PC-3 (cell line): ENCODE measurements at regions of chr1 and their contacts with region 1.

Region 1: GRCh38 chr1:45303582-45304310 is 22.9 kb upstream of the HPDL start:
- DNase-seq: peak; percentile 98
- ATAC-seq: peak; percentile 90
- H3K4me3 ChIP-seq: peak overlapping the region; percentile 73
- H3K27ac ChIP-seq: peak overlapping the region; percentile 71
- H3K4me1 ChIP-seq: peaks cover 22% of the 10 kb centered on the region
- H3K27me3 ChIP-seq: no peaks in the 10 kb centered on the region
- CTCF ChIP-seq: peak; percentile 78

Region 2: GRCh38 chr1:44792783-44793714 is 510.7 kb before region 1 on chr1:
- CTCF ChIA-PET with region 1: no interaction called
- POLR2A ChIA-PET with region 1: no interaction called
- intact Hi-C with region 1: loop called (anchors 5 kb)
- DNase-seq: no peak
- ATAC-seq: no peak
- H3K4me3 ChIP-seq: no peak overlapping the region
- H3K27ac ChIP-seq: no peak overlapping the region
- H3K4me1 ChIP-seq: no peaks in the 10 kb centered on the region
- H3K27me3 ChIP-seq: no peaks in the 10 kb centered on the region
- CTCF ChIP-seq: no peak

Region 3: GRCh38 chr1:44985747-44986359 is 317.9 kb before region 1 on chr1:
- CTCF ChIA-PET with region 1: no interaction called
- POLR2A ChIA-PET with region 1: interaction called, 11 read pairs
- intact Hi-C with region 1: no loop called
- DNase-seq: no peak
- ATAC-seq: peak; percentile 19
- H3K4me3 ChIP-seq: peak overlapping the region; percentile 82
- H3K27ac ChIP-seq: 0 out of 2 replicates have a peak overlapping the region, but pooled peaks have one; percentile 5
- H3K4me1 ChIP-seq: peaks cover 3% of the 10 kb centered on the region; the same call in 1 of the 2 replicates
- H3K27me3 ChIP-seq: no peaks in the 10 kb centered on the region
- CTCF ChIP-seq: no peak

Region 4: DNA sequence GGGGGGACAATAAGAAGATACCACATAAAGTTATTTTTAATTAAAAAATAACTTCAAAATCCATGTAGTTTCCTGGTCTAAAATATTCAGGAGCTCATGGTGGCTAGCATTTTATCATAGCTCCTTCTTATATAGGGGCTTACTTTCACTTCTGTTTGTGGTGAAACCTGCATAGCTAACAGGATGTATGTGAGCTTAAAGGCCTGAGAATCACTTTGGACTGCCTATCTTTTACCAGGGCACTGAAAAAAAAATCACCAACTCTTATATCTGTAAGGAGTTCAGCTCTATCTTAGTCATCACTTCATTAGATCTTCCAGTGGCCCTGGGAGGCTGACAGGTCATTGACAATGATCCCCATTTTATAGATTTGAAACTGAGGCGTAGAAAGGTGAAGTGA is 270.4 kb before region 1 on chr1:
- CTCF ChIA-PET with region 1: interaction called, 5 read pairs
- POLR2A ChIA-PET with region 1: interaction called, 15 read pairs
- intact Hi-C with region 1: no loop called
- DNase-seq: no peak
- ATAC-seq: no peak
- H3K4me3 ChIP-seq: no peak overlapping the region
- H3K27ac ChIP-seq: no peak overlapping the region
- H3K4me1 ChIP-seq: no peaks in the 10 kb centered on the region
- H3K27me3 ChIP-seq: no peaks in the 10 kb centered on the region
- CTCF ChIP-seq: no peak

Region 5: GRCh38 chr1:45230540-45230939 is 73.2 kb before region 1 on chr1:
- CTCF ChIA-PET with region 1: no interaction called
- POLR2A ChIA-PET with region 1: no interaction called
- intact Hi-C with region 1: loop called (anchors 1 kb)
- DNase-seq: peak; percentile 40
- ATAC-seq: peak; percentile 56
- H3K4me3 ChIP-seq: no peak overlapping the region
- H3K27ac ChIP-seq: no peak overlapping the region
- H3K4me1 ChIP-seq: no peaks in the 10 kb centered on the region
- H3K27me3 ChIP-seq: no peaks in the 10 kb centered on the region
- CTCF ChIP-seq: peak; percentile 45; the same call in 1 of the 2 replicates

Region 6: DNA sequence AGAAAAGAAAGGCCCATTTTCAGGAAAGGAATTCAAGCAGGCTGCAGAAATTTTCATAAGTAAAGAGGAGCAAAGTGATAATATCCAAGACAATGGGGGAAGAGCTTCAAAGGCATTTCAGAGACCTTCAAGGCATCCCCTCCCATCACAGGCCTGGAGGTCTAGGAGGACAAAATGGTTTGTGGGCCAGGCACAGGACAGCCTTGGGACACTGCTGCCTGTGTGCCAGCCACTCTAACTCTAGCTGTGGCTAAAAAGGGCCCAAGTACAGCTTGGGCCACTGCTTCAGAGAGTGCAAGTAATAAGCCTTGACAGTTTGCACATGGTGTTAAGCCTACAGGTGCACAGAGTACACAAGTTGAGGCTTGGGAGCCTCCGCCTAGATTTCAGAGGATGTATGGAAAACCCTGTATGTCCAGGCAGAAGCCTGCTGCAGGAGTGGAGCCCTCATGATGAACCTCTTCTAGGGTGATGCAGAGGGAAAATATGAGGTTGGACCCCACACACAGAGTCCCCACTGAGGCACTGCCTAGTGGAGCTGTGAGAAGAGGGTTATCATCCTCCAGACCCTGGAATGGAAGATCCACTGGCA is 45.6 kb before region 1 on chr1:
- CTCF ChIA-PET with region 1: no interaction called
- POLR2A ChIA-PET with region 1: no interaction called
- intact Hi-C with region 1: no loop called
- DNase-seq: no peak
- ATAC-seq: no peak
- H3K4me3 ChIP-seq: no peak overlapping the region
- H3K27ac ChIP-seq: no peak overlapping the region
- H3K4me1 ChIP-seq: no peaks in the 10 kb centered on the region
- H3K27me3 ChIP-seq: no peaks in the 10 kb centered on the region
- CTCF ChIP-seq: no peak

Region 7: DNA sequence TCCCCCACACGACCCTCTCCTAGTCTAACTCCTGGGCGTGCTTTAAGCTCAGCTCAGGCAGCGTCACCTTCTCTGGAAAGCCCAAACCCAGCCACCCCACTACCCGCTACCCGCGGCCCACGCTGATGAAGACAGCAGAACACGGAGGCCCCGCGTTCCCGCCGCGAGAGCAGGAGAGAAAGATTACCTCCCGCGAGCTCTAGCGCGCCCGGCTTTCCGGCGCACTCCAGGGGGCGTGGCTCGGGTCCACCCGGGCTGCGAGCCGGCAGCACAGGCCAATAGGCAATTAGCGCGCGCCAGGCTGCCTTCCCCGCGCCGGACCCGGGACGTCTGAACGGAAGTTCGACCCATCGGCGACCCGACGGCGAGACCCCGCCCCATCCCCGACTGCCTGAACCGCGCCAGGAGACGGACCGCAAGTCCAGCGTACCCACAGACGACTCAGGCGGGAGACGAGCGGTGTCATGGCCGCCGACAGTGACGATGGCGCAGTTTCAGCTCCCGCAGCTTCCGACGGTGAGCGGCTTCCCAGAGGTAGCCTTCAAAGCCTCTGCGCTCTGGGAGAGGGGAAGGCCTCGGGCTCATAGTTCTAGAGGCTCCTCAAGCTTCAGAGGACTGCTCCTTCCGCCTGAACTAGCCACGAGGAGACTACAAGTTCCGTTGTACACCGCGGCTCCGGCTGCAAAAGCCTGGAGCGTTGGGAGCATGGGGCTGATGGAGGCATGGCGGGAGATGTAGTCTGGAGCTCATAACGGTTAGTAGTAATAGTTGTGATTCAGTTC is 36.2 kb after region 1 on chr1 and contains the starts of genes MUTYH and TOE1:
- CTCF ChIA-PET with region 1: interaction called, 18 read pairs
- POLR2A ChIA-PET with region 1: interaction called, 85 read pairs
- intact Hi-C with region 1: loop called (anchors 1 kb)
- DNase-seq: peak; percentile 93
- ATAC-seq: peak; percentile 80
- H3K4me3 ChIP-seq: peak within 1 kb of the TSS; percentile 83
- H3K27ac ChIP-seq: peak within 1 kb of the TSS; percentile 76
- H3K4me1 ChIP-seq: peaks cover 43% of the 10 kb centered on the region
- H3K27me3 ChIP-seq: no peaks in the 10 kb centered on the region
- CTCF ChIP-seq: no peak
- total RNA-seq, gene MUTYH: 21.4 and 22.8 TPM in 2 replicates
- total RNA-seq, gene TOE1: 18.2 and 19.5 TPM in 2 replicates

Region 8: GRCh38 chr1:45385302-45385701 is 81.6 kb after region 1 on chr1:
- CTCF ChIA-PET with region 1: no interaction called
- POLR2A ChIA-PET with region 1: interaction called, 10 read pairs
- intact Hi-C with region 1: no loop called
- DNase-seq: no peak
- ATAC-seq: no peak
- H3K4me3 ChIP-seq: no peak overlapping the region
- H3K27ac ChIP-seq: no peak overlapping the region
- H3K4me1 ChIP-seq: no peaks in the 10 kb centered on the region
- H3K27me3 ChIP-seq: no peaks in the 10 kb centered on the region
- CTCF ChIP-seq: no peak

Region 9: DNA sequence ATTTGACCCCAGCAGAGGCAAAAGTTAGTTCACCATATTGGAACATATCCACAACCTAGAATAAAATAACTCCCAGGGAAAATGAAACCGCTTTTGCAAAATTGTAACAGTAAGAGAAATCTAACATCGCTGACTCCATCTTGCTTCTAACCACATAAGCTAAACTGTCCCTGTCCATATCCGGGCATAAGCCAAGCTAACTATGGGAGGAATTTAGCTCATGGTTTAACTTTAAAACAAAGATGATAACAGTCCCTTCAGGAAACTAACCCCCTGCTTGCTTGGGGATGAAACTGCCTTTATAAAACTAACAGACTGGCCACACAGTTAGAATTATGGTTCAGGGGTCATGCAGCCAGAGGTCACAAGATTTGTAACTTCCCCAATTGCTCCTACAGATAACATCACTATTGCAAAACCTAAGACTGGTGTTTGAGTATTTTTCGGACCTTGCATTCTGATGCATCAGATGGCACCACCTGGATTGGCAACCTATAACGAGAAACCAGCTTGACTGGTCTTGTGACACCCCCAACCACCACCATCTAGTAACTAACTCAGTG is 140.9 kb after region 1 on chr1:
- CTCF ChIA-PET with region 1: no interaction called
- POLR2A ChIA-PET with region 1: no interaction called
- intact Hi-C with region 1: no loop called
- DNase-seq: peak; percentile 20
- ATAC-seq: no peak
- H3K4me3 ChIP-seq: no peak overlapping the region
- H3K27ac ChIP-seq: no peak overlapping the region
- H3K4me1 ChIP-seq: peaks cover 9% of the 10 kb centered on the region
- H3K27me3 ChIP-seq: no peaks in the 10 kb centered on the region
- CTCF ChIP-seq: no peak